GM10248 (cell line): ENCODE measurements at regions of chr5 and their contacts with region 1.

Region 1: DNA sequence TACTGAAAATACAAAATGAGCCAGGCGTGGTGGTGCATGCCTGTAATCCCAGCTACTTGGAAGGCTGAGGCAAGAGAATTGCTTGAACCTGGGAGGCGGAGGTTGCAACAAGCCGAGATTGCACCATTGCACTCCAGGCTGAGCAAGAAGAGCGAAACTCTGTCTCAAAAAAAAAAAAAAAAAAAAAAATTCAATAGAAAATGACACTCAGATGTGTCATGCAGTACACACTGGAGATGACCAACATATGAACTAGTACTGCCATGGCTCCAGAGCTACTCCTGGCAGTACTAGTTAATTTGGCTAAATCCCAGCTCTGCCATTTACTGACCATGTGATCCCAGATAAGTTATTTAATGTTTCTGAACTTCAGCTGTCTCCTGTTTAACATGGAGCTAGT is 7.3 kb downstream of the ATOX1 start:
- DNase-seq: no peak
- CTCF ChIP-seq: no peak

Region 2: GRCh38 chr5:151733358-151734063 is 17.6 kb before region 1 on chr5:
- CTCF ChIA-PET with region 1: interaction called, 86 read pairs
- POLR2A ChIA-PET with region 1: no interaction called
- DNase-seq: no peak
- CTCF ChIP-seq: no peak

Region 3: GRCh38 chr5:151771259-151772028 is 20.4 kb after region 1 on chr5 and contains the start of gene G3BP1:
- CTCF ChIA-PET with region 1: interaction called, 155 read pairs
- POLR2A ChIA-PET with region 1: interaction called, 12 read pairs
- DNase-seq: peak; percentile 97
- CTCF ChIP-seq: peak; percentile 68

Region 4: DNA sequence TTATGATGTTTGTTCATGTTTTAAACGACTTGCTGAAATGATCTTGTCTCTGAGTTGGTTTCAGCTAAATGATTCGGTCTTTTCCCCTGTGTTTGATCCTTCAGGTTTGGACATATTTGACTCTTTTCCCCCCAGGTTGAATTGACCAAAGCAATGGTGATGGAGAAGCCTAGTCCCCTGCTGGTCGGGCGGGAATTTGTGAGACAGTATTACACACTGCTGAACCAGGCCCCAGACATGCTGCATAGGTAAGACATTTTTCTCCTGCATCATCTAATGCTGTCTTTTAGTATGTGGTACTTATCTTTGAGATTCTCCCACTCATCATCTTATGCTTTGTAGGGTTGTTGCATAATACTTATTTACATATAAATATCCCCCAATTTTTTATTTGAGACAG is 35.4 kb after region 1 on chr5:
- CTCF ChIA-PET with region 1: no interaction called
- POLR2A ChIA-PET with region 1: no interaction called
- DNase-seq: no peak
- CTCF ChIP-seq: no peak

Region 5: DNA sequence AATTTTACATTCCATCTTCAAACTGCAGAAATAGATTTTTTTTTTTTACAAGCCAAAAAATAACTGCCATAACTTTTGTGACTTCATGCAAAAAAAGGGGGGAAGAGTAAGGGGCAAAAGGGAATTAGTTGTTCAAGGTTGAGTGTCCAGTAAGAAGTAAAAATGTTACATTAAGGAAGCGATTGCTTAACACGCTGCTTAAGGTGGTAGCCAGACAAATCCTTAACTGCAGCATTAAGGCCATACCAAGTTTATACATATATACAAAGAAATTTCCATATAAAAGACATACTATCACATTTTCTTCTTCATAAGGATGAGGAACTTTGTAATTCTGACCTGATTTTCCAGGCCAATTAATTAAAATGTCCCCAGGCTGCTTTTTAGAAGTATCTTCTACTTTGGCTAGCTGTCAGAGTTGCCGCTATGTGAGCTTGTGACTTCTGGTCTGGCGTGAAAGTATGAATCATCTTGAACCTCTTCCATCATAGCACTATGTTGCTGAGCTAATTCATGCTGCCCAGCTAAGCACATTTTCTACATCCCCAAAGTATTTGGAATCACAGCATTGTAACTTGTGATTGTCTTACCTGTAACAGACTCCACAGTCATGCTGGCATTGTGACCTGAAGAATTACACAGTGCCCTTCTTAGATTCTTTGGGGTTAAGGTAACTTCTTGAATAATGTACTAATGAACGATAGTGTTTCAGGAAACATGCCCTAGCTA is 60.7 kb after region 1 on chr5:
- CTCF ChIA-PET with region 1: no interaction called
- POLR2A ChIA-PET with region 1: no interaction called
- DNase-seq: no peak
- CTCF ChIP-seq: no peak

Region 6: DNA sequence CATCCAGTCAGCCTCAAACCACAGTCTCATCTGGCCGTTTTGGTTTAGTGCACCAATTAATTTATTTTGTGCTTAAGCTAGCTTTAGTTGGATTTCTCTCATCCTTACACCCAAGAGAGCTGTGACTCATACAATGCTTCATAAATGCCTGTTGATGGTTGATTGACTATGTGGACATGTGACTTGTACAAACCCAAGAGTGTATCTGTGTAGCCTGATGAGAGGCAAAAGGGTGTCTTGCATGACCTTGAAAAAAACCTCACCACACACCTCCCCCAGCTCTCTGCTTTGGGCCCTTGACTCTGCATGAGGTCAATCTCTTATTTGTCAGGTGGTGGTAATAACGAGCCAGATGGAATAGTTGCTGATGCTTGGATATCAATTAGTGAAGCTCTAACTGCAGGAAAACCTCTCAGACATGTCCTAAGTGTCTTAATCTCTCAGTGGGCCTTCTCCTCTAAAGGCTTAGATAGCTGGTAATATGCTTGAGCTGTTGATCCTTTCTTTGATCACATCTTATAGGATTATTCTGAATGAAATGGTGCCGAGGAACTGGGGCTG is 184.1 kb after region 1 on chr5:
- CTCF ChIA-PET with region 1: no interaction called
- POLR2A ChIA-PET with region 1: no interaction called
- DNase-seq: no peak
- CTCF ChIP-seq: no peak

Region 7: GRCh38 chr5:152309926-152310450 is 558.9 kb after region 1 on chr5:
- CTCF ChIA-PET with region 1: no interaction called
- POLR2A ChIA-PET with region 1: no interaction called
- DNase-seq: no peak
- CTCF ChIP-seq: no peak